MCF 10A (cell line): ENCODE measurements at regions of chr1 and their contacts with region 1.

Region 1: DNA sequence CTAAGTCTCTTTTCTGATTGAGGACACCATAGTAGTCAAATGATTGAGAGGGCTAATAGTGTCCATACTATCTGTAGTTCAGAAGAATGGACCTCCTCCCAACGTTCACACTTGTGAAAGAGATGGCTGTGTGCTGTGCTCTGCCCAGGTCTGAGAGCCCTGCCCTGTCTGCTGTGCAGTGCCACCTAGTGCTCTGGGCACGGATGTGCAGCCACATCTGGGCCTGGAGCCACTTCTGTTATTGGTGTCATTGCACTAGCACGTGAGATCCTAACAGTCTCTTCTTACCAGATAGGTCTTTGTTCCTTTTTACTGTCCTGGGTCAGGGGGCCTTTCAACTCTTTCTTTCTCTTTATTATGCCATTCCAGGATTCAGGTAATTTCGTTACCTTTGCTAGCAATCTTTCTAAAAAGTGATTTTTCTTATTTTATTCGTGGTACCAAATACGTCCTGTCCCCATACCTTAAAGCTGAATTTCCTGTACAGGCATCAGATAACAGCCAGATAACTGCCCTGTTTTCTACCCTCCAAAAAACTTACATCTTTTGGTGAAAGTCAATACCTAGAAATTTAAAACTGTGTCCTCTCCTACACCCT is 21.7 kb downstream of the INTS3 start:
- DNase-seq: peak; percentile 89
- H3K4me3 Mint-ChIP-seq: no peak overlapping the region
- H3K27ac Mint-ChIP-seq: no peak overlapping the region
- H3K4me1 Mint-ChIP-seq: peaks cover 5% of the 10 kb centered on the region
- H3K27me3 Mint-ChIP-seq: no peaks in the 10 kb centered on the region
- CTCF ChIP-seq: peak; percentile 98

Region 2: DNA sequence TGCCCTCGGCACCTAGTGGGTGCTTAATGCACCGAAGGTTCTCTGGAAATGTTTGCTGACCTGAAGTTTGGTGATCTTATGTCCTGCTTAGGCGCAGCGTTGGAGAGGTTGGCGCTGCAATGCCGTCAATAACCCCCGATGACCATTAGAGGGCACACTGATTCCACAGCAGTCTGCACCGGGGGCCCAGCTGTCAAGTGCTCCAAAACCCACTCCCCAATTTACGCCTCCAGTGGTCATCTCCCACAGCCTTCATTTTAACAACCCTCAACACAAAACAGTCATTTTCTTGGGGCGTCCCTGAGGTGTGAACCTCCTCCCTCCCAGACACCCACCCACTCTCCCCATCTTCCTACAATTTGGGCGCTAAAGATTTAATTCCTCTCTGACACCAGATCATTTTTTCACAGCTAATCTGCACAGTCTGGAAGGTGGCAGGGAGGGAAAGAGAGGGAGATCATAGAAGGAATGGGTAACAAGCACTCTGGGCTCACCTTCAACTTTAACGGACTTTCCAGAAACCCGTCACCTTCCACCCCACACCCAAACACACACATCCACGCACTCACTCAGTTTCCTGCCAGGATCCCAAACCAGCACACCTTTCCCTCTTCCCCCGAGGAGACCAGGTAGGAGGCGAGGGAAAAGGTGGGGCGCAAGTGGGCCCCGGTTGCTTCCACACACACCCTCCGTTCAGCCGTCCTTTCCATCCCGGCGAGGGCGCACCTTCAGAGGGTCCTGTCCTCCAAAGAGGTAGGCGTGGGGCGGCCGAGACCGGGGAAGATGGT is 71.6 kb before region 1 on chr1:
- CTCF ChIA-PET with region 1: interaction called, 273 read pairs
- POLR2A ChIA-PET with region 1: no interaction called
- intact Hi-C with region 1: loop called (anchors 1 kb)
- DNase-seq: peak; percentile 66
- H3K4me3 Mint-ChIP-seq: peak overlapping the region; percentile 73
- H3K27ac Mint-ChIP-seq: no peak overlapping the region
- H3K4me1 Mint-ChIP-seq: peaks cover 7% of the 10 kb centered on the region
- H3K27me3 Mint-ChIP-seq: peaks cover 41% of the 10 kb centered on the region
- CTCF ChIP-seq: peak; percentile 98

Region 3: DNA sequence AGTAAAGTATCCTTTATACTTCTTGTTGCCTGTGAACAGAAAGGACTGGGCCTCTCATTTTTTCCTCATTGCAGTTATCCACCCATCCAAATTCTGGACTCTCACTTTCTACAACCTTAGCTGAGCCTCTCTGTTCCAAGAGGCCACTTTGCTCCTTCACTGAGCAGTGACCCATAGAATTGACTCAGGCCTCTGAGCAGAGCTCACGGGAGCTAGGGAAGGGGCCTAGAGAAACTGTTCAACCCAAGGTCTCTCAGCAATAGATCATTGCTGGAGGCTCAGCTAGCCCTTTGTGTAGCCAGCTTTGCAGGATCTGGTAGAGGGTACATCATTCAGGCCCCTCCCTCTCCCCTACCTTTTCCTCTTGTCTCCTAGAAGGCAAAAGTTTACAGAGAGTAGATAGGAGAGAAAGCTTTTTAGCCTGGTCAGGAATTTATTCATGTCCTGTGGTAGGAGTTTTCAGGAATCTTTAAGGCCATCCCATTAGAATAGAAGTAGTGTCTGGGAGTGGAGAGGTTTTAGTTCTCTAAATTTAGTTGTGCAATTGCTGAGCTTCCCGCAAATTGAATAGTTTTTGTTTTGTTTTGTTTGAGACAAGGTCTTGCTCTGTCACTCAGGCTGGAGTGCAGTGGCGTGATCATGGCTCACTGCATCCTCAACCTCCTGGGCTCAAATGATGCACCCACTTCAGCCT is 15.0 kb before region 1 on chr1:
- CTCF ChIA-PET with region 1: interaction called, 21 read pairs
- POLR2A ChIA-PET with region 1: interaction called, 4 read pairs
- intact Hi-C with region 1: no loop called
- DNase-seq: no peak
- H3K4me3 Mint-ChIP-seq: no peak overlapping the region
- H3K27ac Mint-ChIP-seq: no peak overlapping the region
- H3K4me1 Mint-ChIP-seq: peaks cover 19% of the 10 kb centered on the region
- H3K27me3 Mint-ChIP-seq: no peaks in the 10 kb centered on the region
- CTCF ChIP-seq: no peak

Region 4: GRCh38 chr1:153899509-153899908 is 150.0 kb after region 1 on chr1:
- CTCF ChIA-PET with region 1: no interaction called
- POLR2A ChIA-PET with region 1: no interaction called
- intact Hi-C with region 1: no loop called
- DNase-seq: no peak
- H3K4me3 Mint-ChIP-seq: no peak overlapping the region
- H3K27ac Mint-ChIP-seq: no peak overlapping the region
- H3K4me1 Mint-ChIP-seq: peaks cover 8% of the 10 kb centered on the region
- H3K27me3 Mint-ChIP-seq: no peaks in the 10 kb centered on the region
- CTCF ChIP-seq: no peak